ENCODE measurements at regions of chr1 and their contacts with region 1.

Region 1: DNA sequence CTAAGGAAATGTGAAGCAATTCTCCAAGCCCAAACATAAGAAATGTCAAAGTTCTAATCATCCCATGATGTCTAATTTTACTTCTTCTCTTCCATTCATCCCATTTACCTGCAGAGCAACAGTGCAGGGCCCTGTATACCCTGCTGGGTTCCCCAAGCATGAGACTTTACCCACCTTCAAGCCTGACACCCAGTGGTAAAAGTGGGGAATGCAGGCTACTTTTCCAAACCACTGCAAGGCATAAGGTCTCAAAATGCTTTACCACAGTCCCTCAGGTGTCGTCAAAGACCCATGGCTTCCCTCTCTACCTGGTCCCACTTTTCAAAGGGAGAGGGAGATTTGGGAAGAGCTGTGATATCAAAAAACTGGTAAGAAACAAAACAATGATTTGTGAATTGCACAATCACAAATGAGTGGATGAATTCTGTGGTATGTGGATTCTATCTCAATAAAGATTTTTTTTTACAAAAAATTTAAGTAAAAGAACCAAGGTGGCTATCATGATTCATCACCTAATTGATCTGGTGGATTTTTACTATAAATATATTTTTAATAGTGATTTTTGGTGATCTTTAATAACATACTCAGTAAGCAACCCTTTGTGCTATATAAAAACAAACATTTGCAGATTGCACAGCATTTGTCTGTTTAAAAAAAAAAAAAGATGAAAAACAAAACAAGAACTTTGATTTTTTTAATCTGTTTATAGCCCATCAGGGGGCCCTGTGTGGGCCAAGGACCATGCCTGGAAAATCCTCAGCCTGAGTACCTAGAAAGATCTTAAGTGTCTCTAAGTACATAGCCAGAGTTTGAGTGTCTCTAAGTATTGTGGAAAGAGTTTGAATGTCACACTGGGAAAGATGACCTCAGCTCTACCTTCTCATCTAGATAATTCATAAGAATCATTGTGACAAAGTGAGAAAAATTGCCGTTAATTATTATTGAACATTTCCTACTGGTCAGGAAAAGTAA is 73.1 kb upstream of the GJB5 start:
- H3K4me3 ChIP-seq: no peak overlapping the region
- H3K27ac ChIP-seq: no peak overlapping the region
- H3K4me1 ChIP-seq: no peaks in the 10 kb centered on the region; the same call in 1 of the 2 replicates
- CTCF ChIP-seq: peak; percentile 31; the same call in 1 of the 2 replicates

Region 2: GRCh38 chr1:34511802-34512201 is 170.0 kb before region 1 on chr1:
- CTCF ChIA-PET with region 1: no interaction called
- POLR2A ChIA-PET with region 1: no interaction called
- H3K4me3 ChIP-seq: no peak overlapping the region
- H3K27ac ChIP-seq: no peak overlapping the region
- H3K4me1 ChIP-seq: no peaks in the 10 kb centered on the region
- CTCF ChIP-seq: no peak

Region 3: DNA sequence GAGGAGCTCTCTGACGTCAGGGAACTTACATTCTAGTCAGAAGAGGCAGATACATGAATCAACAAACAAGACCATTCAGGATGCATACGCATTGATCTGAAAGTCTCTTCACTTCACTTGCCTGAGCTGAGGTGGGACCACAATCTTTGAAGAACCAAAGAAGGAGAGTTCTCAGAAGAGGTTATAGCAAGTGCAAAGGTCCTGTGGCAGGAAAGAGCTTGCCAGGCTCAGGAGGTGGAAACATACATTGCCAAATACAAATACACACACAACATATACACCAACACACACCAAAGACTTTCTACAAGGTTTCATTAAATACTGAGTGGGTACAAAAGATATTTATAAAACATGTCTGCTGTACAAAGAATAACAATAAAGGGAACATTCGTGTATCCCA is 13.7 kb before region 1 on chr1:
- CTCF ChIA-PET with region 1: interaction called, 11 read pairs
- POLR2A ChIA-PET with region 1: no interaction called
- H3K4me3 ChIP-seq: no peak overlapping the region
- H3K27ac ChIP-seq: no peak overlapping the region
- H3K4me1 ChIP-seq: no peaks in the 10 kb centered on the region
- CTCF ChIP-seq: no peak

Region 4: DNA sequence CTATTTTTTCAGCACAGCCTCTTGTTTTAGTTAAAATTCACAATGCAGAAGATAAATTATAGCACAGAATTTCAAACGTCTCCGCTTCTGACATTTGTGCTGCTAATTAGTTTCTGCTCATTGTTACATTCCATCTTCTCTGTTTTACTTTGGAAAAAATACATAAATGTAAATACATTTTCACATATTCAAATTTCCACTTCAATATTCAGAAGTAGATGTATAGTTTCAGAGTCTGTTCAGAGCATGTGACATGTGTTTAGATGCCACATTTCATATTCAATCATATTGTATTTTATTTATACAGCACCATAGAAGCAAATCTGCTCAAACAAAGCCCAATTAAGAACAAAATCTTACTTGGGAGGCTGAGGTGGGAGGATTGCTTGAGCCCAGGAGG is 283.8 kb after region 1 on chr1:
- CTCF ChIA-PET with region 1: no interaction called
- POLR2A ChIA-PET with region 1: no interaction called
- H3K4me3 ChIP-seq: no peak overlapping the region
- H3K27ac ChIP-seq: no peak overlapping the region
- H3K4me1 ChIP-seq: no peaks in the 10 kb centered on the region
- CTCF ChIP-seq: no peak

Region 5: DNA sequence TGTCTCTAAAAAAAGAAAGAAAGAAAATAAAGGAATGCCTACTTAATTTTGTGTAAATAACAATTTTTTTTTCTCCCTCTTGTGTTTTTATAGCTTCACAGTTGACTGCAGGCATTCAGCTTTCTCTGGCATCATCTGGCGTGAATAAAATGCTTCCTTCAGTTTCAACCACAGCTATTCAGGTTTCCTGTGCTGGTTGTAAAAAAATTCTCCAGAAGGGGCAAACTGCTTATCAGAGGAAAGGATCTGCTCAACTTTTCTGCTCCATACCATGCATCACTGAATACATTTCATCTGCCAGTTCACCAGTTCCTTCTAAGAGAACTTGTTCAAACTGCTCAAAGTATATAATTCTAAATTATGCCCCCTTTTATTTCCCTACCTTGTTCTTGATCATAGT is 415.5 kb after region 1 on chr1:
- CTCF ChIA-PET with region 1: no interaction called
- POLR2A ChIA-PET with region 1: no interaction called
- H3K4me3 ChIP-seq: no peak overlapping the region
- H3K27ac ChIP-seq: no peak overlapping the region
- H3K4me1 ChIP-seq: no peaks in the 10 kb centered on the region
- CTCF ChIP-seq: no peak

Measured in HEK293 (cell line).